Activated naive CD8-positive, alpha-beta T cell treated with anti-CD3 and anti-CD28 coated beads, Interleukin-2, amount 10 ng/mL, durations not matched to agents 7 days and 5 days (primary cell): ENCODE measurements at regions of chr1 and their contacts with region 1.

Region 1: DNA sequence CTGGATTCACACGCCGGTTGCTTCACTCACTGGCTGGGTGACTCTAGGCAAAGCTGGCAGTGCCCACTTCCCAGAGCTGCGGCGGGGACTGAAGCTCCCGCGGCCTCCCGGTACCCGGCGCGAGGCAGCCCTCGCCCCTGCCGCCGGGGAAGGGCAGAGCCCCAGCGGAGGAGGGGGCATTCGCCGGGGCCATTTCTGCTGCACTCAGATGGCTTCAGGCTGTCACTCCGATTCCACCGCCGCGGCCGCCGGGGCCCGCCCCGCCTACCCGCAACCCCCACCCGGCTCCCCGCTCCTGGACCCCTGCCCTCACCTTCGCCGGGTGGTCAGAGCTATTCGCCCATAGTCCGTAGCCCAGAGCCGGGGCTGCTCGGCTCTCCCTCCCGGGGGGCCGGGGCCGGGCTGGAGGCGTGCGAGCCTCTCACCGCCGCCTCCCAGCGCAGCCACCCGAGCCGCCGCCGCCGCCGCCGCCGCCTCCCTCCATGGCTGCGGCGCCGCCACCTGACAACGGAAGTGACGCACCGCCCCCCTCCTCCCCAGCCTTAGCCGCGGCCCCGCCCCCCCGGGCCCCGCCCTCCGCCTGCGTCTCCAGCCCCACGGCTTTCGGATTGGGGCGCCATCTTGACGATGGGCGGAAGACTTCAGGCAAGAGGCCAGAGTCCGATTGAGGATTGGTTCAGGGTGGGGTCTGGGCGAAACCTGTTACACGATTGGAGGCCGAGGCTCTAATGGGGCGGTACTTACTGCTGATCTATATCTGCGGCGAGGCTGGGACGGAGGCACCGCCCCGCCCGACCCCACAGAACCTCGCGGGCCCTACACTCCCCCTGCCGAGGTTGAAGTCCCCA is at the start of gene STK40:
- DNase-seq: peak; percentile 93
- ATAC-seq: peak; percentile 89
- H3K4me3 Mint-ChIP-seq: peak within 1 kb of the TSS; percentile 89
- H3K27ac Mint-ChIP-seq: peak within 1 kb of the TSS; percentile 96
- H3K4me1 Mint-ChIP-seq: peaks cover 33% of the 10 kb centered on the region
- H3K27me3 Mint-ChIP-seq: no peaks in the 10 kb centered on the region
- total RNA-seq, gene STK40: 59.5 to 64.7 TPM

Region 2: DNA sequence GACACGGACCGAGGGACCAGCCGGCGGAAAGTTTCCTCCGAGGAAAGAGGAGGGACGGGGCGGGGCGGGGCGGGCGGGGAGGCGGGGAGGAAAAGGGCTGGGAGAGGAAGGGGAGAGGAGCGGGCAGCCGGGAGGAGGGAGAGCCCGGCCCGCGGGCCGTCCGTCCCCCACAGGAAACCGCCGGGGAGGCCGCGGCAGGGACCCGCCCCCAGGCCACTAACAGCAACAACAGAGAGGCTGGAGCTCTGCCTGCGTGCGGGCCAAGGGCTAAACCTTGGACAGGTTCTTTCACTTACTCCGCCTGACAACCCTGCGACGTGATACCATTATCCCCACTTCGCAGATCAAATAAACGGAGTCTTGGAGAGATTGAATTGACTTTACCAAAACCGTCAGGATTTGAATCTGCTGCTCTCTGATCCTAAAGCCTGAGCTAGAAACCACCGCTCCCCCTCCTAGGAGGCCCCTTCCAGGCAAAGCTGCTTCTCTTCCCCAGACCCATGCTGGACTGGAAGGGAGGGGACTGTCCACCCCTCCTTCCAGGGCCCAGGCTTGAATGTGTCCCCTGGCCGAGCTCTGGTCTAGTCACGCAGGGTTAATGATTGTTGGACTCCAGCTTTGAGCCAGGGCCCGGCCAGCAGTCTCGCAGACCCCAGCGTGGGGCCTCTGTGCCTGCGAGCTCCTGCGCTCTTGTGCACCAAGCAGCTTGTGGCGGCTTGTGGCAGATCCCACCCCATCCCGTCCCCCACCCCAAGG is 61.9 kb before region 1 on chr1 and contains the start of gene EVA1B:
- POLR2A ChIA-PET with region 1: interaction called, 11 read pairs
- DNase-seq: peak; percentile 72
- ATAC-seq: peak; percentile 46
- H3K4me3 Mint-ChIP-seq: peak within 1 kb of the TSS; percentile 83
- H3K27ac Mint-ChIP-seq: peak within 1 kb of the TSS; percentile 38
- H3K4me1 Mint-ChIP-seq: peaks cover 38% of the 10 kb centered on the region
- H3K27me3 Mint-ChIP-seq: peaks cover 2% of the 10 kb centered on the region
- total RNA-seq, gene EVA1B: 11.6 to 14.1 TPM

Region 3: DNA sequence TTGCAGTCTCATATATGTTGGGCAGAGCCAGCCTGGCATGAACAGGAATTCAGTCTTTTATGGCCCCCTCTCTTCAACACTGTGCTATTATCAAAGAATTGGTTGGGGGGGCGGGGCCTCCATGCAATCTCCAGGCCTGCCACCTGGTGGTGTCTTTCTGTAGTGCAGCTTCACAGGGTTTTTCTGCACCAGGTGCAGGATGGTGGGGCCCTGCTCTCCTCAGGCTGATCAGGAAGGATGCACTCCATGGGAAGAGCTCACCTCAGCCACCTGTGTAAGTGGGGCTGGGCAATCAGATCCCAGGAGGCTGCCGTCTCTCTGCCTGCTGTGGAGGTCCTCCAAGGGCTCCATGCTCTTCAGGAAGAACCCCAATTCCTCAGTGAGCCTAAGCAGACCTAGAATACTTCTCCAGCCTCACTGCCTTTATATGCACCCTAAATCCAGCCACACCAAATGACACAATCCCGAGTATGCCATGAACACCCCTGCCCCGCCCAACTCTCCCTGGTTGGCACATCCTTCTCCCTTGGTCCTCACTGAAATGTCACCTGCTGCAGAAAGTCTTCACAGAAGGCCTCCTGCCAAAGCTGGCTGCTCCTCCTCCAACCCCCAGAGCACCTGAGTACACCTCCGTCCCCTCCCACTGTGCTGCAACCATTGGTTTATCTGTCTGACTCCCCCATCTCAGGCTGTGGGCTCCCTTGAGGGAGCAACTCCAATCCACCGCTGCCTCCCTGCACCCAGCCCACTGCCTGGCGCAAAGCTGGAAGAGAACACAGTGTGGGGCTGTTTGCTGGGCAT is 16.4 kb before region 1 on chr1:
- POLR2A ChIA-PET with region 1: interaction called, 28 read pairs
- DNase-seq: peak; percentile 84
- ATAC-seq: peak; percentile 21
- H3K4me3 Mint-ChIP-seq: no peak overlapping the region
- H3K27ac Mint-ChIP-seq: peak overlapping the region; percentile 26
- H3K4me1 Mint-ChIP-seq: peaks cover 56% of the 10 kb centered on the region
- H3K27me3 Mint-ChIP-seq: no peaks in the 10 kb centered on the region

Region 4: DNA sequence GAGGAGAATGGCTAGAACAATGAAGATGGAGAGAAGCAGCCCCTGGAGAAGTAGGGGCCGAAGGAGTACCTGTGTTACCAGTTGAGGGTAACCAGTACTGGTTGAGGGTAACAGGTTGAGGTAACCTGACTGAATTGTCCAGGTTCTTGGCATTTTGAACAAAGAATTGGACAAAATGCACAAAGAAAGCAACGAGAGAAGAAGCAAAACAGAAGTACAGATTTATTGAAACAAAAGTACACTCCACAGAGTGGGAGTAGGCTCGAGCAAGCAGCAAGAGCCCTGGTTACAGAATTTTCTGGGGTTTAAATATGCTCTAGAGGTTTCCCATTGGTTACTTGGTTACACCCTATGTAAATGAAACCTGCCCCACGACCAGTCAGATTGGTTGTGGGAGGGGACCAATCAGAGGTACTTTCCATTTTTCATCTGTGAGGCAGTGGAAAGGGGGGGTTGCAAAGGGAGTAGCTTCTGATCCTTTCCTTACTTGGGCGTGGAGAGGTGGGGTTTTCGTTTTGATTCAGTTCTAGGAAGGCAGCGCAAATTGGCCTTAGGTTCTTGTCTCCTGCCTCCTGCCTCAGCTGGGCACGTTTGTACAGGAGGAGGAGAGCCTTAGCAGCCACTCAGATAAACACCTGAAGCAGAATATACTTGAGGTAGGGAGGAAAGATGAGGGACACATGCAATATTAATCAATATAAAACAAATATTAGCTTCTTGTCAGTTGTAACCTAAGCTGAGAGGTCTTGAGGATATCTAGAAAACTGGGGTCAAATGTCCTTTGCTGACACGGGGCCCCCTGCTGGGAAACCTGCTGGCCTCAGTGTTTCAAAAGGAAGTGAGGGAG is 26.3 kb after region 1 on chr1:
- POLR2A ChIA-PET with region 1: interaction called, 11 read pairs
- DNase-seq: no peak
- ATAC-seq: peak; percentile 92
- H3K4me3 Mint-ChIP-seq: peak overlapping the region; percentile 43
- H3K27ac Mint-ChIP-seq: peak overlapping the region; percentile 89
- H3K4me1 Mint-ChIP-seq: peaks cover 13% of the 10 kb centered on the region
- H3K27me3 Mint-ChIP-seq: no peaks in the 10 kb centered on the region

Region 5: GRCh38 chr1:36450270-36450918 is 64.8 kb after region 1 on chr1 and contains the start of gene OSCP1:
- POLR2A ChIA-PET with region 1: interaction called, 11 read pairs
- DNase-seq: peak; percentile 89
- ATAC-seq: peak; percentile 98
- H3K4me3 Mint-ChIP-seq: peak within 1 kb of the TSS; percentile 92
- H3K27ac Mint-ChIP-seq: peak within 1 kb of the TSS; percentile 87
- H3K4me1 Mint-ChIP-seq: peaks cover 25% of the 10 kb centered on the region
- H3K27me3 Mint-ChIP-seq: no peaks in the 10 kb centered on the region
- total RNA-seq, gene OSCP1: 1.1 to 1.8 TPM

Region 6: GRCh38 chr1:36471830-36472641 is 86.4 kb after region 1 on chr1:
- POLR2A ChIA-PET with region 1: no interaction called
- DNase-seq: no peak
- ATAC-seq: no peak
- H3K4me3 Mint-ChIP-seq: no peak overlapping the region
- H3K27ac Mint-ChIP-seq: no peak overlapping the region
- H3K4me1 Mint-ChIP-seq: peaks cover 5% of the 10 kb centered on the region
- H3K27me3 Mint-ChIP-seq: peaks cover 2% of the 10 kb centered on the region

Region 7: DNA sequence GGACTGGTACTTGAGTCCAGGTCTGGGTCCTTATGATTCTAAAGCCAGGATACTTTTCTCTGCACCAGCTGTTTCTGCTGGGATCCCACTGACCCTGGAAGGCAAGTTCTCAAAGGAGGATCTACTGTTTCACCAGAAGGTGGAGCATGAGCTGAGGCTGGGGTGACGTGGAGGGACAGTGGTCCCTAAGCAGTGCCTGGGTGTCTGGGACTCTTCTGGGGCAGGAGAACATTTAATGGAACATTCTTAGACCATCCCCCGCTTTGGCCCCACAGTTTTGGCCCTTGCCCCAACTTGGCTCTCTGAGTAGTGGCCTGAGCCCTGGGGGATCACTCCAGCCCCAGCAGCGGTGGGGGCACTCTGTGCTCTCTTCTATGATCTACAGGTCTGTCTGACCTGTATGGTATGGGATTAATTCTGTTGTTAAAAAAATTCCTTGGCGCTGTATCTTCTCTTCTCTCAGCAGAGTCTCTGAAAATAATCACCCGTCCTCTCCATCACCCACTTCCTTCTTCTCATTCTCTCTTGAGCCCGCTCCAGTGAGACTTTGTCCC is 157.4 kb after region 1 on chr1:
- POLR2A ChIA-PET with region 1: no interaction called
- DNase-seq: no peak
- ATAC-seq: no peak
- H3K4me3 Mint-ChIP-seq: no peak overlapping the region
- H3K27ac Mint-ChIP-seq: no peak overlapping the region
- H3K4me1 Mint-ChIP-seq: no peaks in the 10 kb centered on the region
- H3K27me3 Mint-ChIP-seq: peaks cover 25% of the 10 kb centered on the region